ENCODE measurements at regions of chr17 and their contacts with region 1.

Region 1: DNA sequence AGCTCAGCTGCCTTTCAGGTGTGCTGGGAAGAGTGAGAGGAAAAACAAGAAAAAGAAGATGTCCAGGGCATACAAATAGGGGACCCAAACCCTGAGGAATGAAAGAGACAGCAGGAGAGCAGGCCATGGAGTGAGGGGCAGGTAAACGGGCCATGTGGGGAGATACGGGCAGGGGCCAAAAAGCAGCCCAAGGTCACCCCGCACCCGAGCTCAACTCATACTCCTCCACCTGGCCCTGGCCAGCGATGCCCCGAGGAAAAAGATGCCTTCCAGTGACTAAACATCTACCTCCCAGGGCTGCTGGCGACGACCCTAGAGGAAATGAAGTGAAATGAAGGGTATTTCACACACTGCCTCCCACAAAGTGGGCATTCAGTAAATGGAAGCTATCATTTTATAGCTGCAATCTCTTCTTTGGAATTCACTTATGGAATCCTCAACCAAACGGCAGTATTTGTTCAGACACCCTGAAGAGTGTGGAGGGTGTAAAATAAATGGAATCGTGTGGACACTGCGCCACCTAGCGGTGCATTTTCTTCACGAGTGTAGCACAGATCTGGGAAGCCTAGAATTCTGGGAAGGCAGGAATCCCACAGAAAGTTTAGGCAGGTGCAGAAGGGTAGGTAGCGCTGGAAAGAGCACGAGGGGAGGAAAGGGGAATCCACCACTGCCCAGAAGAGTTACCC is 14.9 kb downstream of the ELAC2 start:
- DNase-seq: peak; percentile 60
- H3K4me3 Mint-ChIP-seq: no peak overlapping the region
- H3K27ac Mint-ChIP-seq: no peak overlapping the region
- H3K4me1 Mint-ChIP-seq: no peaks in the 10 kb centered on the region
- H3K27me3 Mint-ChIP-seq: no peaks in the 10 kb centered on the region
- CTCF ChIP-seq: peak; percentile 67

Region 2: GRCh38 chr17:12667299-12667958 is 335.5 kb before region 1 on chr17:
- CTCF ChIA-PET with region 1: no interaction called
- intact Hi-C with region 1: loop called (anchors 5 kb)
- DNase-seq: peak; percentile 38
- H3K4me3 Mint-ChIP-seq: no peak overlapping the region
- H3K27ac Mint-ChIP-seq: no peak overlapping the region
- H3K4me1 Mint-ChIP-seq: no peaks in the 10 kb centered on the region
- H3K27me3 Mint-ChIP-seq: peaks cover 39% of the 10 kb centered on the region
- CTCF ChIP-seq: no peak

Region 3: DNA sequence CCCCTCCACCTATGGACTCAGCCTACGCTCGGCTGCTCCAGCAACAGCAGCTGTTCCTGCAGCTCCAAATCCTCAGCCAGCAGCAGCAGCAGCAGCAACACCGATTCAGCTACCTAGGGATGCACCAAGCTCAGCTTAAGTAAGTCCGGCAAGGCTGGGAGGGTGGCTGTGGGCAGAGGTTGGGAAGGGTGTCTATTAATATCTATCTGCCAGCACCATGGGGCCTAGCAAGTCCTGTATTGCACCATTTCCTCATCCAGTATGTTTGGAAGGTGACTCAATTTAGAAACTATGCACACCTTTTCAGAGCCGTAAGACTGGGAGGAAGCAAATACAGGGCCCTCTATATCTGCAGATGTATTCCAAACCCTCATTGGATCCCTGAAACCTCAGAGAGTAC is 258.6 kb before region 1 on chr17:
- CTCF ChIA-PET with region 1: no interaction called
- intact Hi-C with region 1: loop called (anchors 10 kb)
- DNase-seq: peak; percentile 39
- H3K4me3 Mint-ChIP-seq: no peak overlapping the region
- H3K27ac Mint-ChIP-seq: peak overlapping the region; percentile 39
- H3K4me1 Mint-ChIP-seq: peaks cover 48% of the 10 kb centered on the region
- H3K27me3 Mint-ChIP-seq: no peaks in the 10 kb centered on the region
- CTCF ChIP-seq: no peak

Region 4: GRCh38 chr17:13044572-13045065 is 41.7 kb after region 1 on chr17:
- CTCF ChIA-PET with region 1: no interaction called
- intact Hi-C with region 1: no loop called
- DNase-seq: no peak
- H3K4me3 Mint-ChIP-seq: no peak overlapping the region
- H3K27ac Mint-ChIP-seq: no peak overlapping the region
- H3K4me1 Mint-ChIP-seq: no peaks in the 10 kb centered on the region
- H3K27me3 Mint-ChIP-seq: peaks cover 26% of the 10 kb centered on the region
- CTCF ChIP-seq: no peak

Measured in Calu3 (cell line).